Activated naive CD4-positive, alpha-beta T cell treated with anti-CD3 and anti-CD28 coated beads, Interleukin-2, amount 10 ng/mL, durations not matched to agents 7 days and 5 days (primary cell): ENCODE measurements at regions of chr19 and their contacts with region 1.

Region 1: GRCh38 chr19:6674868-6675305 is 4.9 kb upstream of the TNFSF14 start:
- DNase-seq: peak; percentile 91
- H3K4me3 Mint-ChIP-seq: peak overlapping the region; percentile 8
- H3K27ac Mint-ChIP-seq: peak overlapping the region; percentile 61
- H3K4me1 Mint-ChIP-seq: peaks cover 59% of the 10 kb centered on the region
- H3K27me3 Mint-ChIP-seq: peaks cover 15% of the 10 kb centered on the region

Region 2: GRCh38 chr19:6475321-6476108 is 199.4 kb before region 1 on chr19:
- CTCF ChIA-PET with region 1: no interaction called
- DNase-seq: no peak
- H3K4me3 Mint-ChIP-seq: no peak overlapping the region
- H3K27ac Mint-ChIP-seq: peak overlapping the region; percentile 55
- H3K4me1 Mint-ChIP-seq: peaks cover 15% of the 10 kb centered on the region
- H3K27me3 Mint-ChIP-seq: no peaks in the 10 kb centered on the region

Region 3: DNA sequence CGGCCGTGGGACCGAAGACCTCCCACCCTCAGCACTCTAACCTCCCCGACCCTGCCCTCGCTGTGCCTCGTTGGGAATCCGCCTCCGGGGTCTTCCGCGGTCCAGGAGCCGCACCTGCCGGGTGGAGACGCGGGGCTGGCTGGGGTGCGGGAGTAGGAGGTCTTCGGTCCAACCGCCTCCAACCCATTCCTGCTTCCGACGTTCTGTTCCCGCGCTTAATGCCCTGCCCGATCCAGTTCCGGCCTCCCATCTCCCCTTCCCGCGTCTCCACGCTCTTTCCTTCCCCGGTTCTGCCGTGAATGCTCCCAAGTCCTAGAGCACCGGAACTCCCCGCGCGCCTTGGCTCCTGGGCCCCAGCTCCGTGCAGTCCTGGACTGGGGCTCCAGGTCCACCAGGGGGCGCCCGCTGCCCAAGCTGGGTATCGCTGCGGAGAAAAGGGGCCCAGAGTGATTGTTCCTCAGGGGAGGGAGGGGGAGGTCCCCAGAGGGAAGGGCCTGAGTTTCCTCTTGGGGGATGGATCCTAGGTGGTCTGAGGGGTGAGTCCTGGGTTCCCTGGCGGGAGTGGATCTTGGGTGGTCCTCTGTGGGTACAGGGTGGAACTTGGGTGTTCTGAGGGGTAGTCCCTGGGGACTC is 158.1 kb before region 1 on chr19:
- CTCF ChIA-PET with region 1: no interaction called
- DNase-seq: peak; percentile 94
- H3K4me3 Mint-ChIP-seq: peak overlapping the region; percentile 89
- H3K27ac Mint-ChIP-seq: peak overlapping the region; percentile 89
- H3K4me1 Mint-ChIP-seq: peaks cover 34% of the 10 kb centered on the region
- H3K27me3 Mint-ChIP-seq: peaks cover 23% of the 10 kb centered on the region

Region 4: DNA sequence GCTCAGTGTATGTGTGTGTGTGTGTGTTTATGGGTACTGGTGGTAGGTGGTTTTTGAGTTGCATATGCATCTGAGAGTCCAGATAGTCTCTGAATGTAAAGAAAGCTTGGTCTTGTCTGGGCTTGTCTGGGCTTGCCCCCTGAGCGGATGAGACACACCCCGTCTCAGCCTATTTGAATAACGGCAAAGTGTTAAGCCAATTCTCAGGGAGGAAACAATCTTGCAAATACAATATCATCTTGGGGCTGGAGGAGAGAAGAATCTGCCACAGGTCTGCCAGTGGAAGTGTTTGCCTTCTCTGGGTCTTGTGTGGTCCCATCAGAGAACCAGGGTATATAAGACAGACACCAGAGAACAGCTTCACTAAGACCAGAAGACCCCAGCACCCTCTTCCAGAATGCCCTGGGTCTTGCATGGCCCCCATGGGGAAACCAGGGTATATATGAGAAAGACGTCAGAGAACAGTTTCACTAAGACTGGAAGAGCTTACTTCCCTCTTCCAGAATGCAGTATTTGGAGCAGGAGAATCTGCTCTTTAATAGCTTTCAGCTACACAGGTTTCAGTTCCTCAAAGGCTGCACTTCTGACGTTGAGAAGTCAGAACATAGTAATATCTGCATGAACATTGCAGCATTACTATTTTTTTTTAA is 97.3 kb before region 1 on chr19:
- CTCF ChIA-PET with region 1: no interaction called
- DNase-seq: peak; percentile 43
- H3K4me3 Mint-ChIP-seq: no peak overlapping the region
- H3K27ac Mint-ChIP-seq: no peak overlapping the region
- H3K4me1 Mint-ChIP-seq: peaks cover 14% of the 10 kb centered on the region
- H3K27me3 Mint-ChIP-seq: peaks cover 22% of the 10 kb centered on the region

Region 5: DNA sequence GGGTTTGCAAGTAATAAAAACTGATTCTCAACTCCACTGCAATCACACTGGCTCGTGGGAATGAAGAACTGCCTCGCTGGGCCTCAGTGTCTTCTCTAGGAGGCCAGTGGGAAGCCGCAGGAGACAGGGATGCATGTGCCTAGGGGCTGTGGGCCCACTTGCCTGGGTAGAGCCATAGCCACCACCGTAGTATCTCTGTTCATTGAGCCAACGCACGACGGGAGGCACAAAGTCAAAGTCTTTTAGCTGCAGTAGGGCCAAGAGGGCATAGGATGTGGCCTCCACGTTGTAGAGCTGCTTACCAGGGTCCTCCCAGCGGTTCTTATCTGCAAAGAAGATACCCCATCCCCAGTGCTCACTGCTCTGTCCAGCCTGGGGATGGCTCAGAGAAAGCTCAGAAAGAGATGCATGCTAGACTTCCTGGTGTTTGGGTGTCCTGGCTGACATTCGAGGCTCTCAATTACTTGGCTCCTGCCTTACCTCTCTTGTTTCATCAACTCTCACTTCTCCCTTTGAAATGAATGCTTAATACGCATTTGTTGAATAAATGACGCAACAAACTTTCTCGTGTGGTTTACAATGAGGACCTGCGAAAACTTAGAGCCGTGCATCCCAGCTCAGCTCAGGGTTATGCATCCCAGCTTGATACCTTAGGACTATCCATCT is 11.2 kb after region 1 on chr19:
- CTCF ChIA-PET with region 1: interaction called, 12 read pairs
- DNase-seq: no peak
- H3K4me3 Mint-ChIP-seq: no peak overlapping the region
- H3K27ac Mint-ChIP-seq: no peak overlapping the region
- H3K4me1 Mint-ChIP-seq: no peaks in the 10 kb centered on the region
- H3K27me3 Mint-ChIP-seq: peaks cover 26% of the 10 kb centered on the region

Region 6: DNA sequence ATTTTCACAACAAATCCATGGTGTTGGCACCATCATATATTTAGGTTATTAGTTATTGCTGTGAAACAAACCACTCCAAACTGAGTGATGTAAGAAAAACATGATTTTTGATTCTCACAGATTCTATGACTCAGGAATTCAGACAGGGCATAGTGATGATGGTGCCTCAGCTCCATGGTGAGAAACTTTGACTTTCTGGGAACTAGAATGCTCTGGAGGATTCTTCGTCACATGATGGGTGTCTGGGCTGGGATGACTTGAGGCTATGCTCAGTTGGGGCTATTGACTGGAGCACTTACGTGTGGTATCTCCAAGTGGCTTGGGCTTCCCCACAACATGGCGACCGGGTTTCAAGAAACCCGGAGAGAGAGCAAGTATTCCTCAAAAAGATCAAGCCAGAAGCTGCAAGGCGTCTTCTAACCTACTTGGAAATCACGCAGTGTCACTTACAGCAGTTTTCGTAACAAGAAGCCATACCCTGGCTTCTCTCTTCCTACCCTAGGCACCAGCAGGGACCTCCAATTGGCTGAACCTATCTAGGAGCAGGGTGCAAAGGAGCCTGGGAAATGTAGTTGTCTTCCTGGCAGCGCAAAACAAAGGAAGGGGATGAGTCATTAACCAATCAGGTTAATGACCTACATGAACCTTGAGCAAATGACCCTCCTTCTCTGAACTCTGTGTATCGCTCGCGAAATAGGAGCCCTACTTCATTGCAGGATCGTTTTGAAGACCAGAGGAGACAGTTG is 120.0 kb after region 1 on chr19:
- CTCF ChIA-PET with region 1: no interaction called
- DNase-seq: no peak
- H3K4me3 Mint-ChIP-seq: no peak overlapping the region
- H3K27ac Mint-ChIP-seq: no peak overlapping the region
- H3K4me1 Mint-ChIP-seq: peaks cover 86% of the 10 kb centered on the region
- H3K27me3 Mint-ChIP-seq: no peaks in the 10 kb centered on the region